Heart left ventricle (tissue), 16 donors: ENCODE measurements at regions of chr7 and their contacts with region 1.

Region 1: GRCh38 chr7:137961200-137962177 is 40.4 kb downstream of the CREB3L2 start:
- DNase-seq: peak in 1 of 5 donors; percentile 27
- ATAC-seq: peak in 3 of 4 donors; percentile 12 to 68 (median 44)
- H3K4me3 ChIP-seq: no peak overlapping the region
- H3K27ac ChIP-seq: no peak overlapping the region
- H3K4me1 ChIP-seq: peaks cover 0 to 66% (median 25%) of the 10 kb centered on the region in 12 donors
- H3K27me3 ChIP-seq: no peaks in the 10 kb centered on the region
- CTCF ChIP-seq: no peak
- POLR2A ChIP-seq: no peak

Region 2: GRCh38 chr7:137916980-137917645 is 44.4 kb before region 1 on chr7:
- intact Hi-C with region 1: loop called in 1 of 10 experiments (anchors 10 kb)
- DNase-seq: no peak
- ATAC-seq: no peak
- H3K4me3 ChIP-seq: no peak overlapping the region
- H3K27ac ChIP-seq: peak overlapping the region in 4 of 12 donors; percentile 3 to 52 (median 31)
- H3K4me1 ChIP-seq: peaks cover 0 to 31% (median 4%) of the 10 kb centered on the region in 12 donors
- H3K27me3 ChIP-seq: no peaks in the 10 kb centered on the region
- CTCF ChIP-seq: no peak
- POLR2A ChIP-seq: no peak

Region 3: GRCh38 chr7:138002096-138002827 is 40.8 kb after region 1 on chr7:
- intact Hi-C with region 1: loop called in 1 of 10 experiments (anchors 5 kb)
- DNase-seq: peak; percentile 99
- ATAC-seq: peak; percentile 96 to 98 (median 98)
- H3K4me3 ChIP-seq: peak overlapping the region; percentile 70 to 99 (median 81)
- H3K27ac ChIP-seq: peak overlapping the region in 11 of 12 donors; percentile 86 to 97 (median 92)
- H3K4me1 ChIP-seq: peaks cover 0 to 37% (median 31%) of the 10 kb centered on the region in 12 donors
- H3K27me3 ChIP-seq: no peaks in the 10 kb centered on the region
- CTCF ChIP-seq: peak; percentile 87 to 98 (median 93)
- POLR2A ChIP-seq: no peak

Region 4: DNA sequence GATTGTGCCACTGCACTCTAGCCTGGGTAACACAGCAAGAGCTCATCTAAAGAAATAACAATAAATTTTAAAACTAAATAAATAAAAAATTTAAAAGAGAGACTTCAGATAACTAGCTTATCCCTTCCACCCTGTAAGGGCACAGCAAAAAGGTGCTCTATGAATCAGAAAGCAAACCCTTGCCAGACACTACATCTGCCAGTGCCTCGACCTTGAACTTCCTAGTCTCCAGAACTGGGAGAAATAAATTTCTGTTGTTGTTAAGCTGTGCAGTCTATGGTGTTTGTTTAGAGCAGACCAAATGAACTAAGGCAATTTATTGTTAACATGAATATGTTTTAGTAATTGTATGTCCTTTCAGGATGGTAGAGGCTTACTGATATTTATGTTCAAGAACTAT is 323.6 kb after region 1 on chr7:
- intact Hi-C with region 1: no loop called
- DNase-seq: no peak
- ATAC-seq: no peak
- H3K4me3 ChIP-seq: no peak overlapping the region
- H3K27ac ChIP-seq: no peak overlapping the region
- H3K4me1 ChIP-seq: no peaks in the 10 kb centered on the region
- H3K27me3 ChIP-seq: no peaks in the 10 kb centered on the region
- CTCF ChIP-seq: no peak
- POLR2A ChIP-seq: no peak